ENCODE measurements at regions of chr10 and their contacts with region 1.

Region 1: GRCh38 chr10:62268399-62269114 is at the start of gene RTKN2:
- DNase-seq: peak; percentile 71
- H3K4me3 Mint-ChIP-seq: peak within 1 kb of the TSS; percentile 86
- H3K27ac Mint-ChIP-seq: peak within 1 kb of the TSS; percentile 39
- H3K4me1 Mint-ChIP-seq: peaks cover 21% of the 10 kb centered on the region
- H3K27me3 Mint-ChIP-seq: no peaks in the 10 kb centered on the region
- CTCF ChIP-seq: no peak
- total RNA-seq, gene RTKN2: 1.6 and 2.6 TPM in 2 replicates

Region 2: GRCh38 chr10:62253704-62254103 is 14.9 kb before region 1 on chr10:
- CTCF ChIA-PET with region 1: interaction called, 25 read pairs
- POLR2A ChIA-PET with region 1: interaction called, 6 read pairs
- intact Hi-C with region 1: no loop called
- DNase-seq: no peak
- H3K4me3 Mint-ChIP-seq: no peak overlapping the region
- H3K27ac Mint-ChIP-seq: no peak overlapping the region
- H3K4me1 Mint-ChIP-seq: peaks cover 10% of the 10 kb centered on the region
- H3K27me3 Mint-ChIP-seq: no peaks in the 10 kb centered on the region
- CTCF ChIP-seq: no peak

Region 3: DNA sequence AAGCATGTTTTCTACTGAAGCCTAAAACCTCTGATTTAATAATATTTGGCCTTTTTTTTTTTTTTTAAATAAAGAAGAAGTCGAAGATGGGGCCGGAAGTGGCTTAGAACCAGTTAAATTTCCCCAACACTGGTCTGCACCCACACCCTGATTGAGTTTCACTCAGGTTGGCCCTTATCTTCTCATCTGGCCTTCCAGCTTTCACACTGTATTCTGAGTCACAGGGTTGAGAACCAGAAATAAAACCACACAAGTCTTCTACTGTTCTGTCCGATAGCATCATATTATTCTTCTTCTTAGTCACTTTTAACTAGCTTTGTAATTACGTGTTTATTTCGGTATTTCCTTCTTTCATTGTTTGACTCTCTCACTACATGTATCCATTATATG is 115.5 kb after region 1 on chr10:
- CTCF ChIA-PET with region 1: interaction called, 5 read pairs
- POLR2A ChIA-PET with region 1: interaction called, 4 read pairs
- intact Hi-C with region 1: loop called (anchors 5 kb)
- DNase-seq: peak; percentile 76
- H3K4me3 Mint-ChIP-seq: peak overlapping the region; percentile 30
- H3K27ac Mint-ChIP-seq: peak overlapping the region; percentile 90
- H3K4me1 Mint-ChIP-seq: peaks cover 66% of the 10 kb centered on the region
- H3K27me3 Mint-ChIP-seq: no peaks in the 10 kb centered on the region
- CTCF ChIP-seq: no peak

Region 4: GRCh38 chr10:62414359-62414758 is 145.8 kb after region 1 on chr10:
- CTCF ChIA-PET with region 1: interaction called, 10 read pairs
- POLR2A ChIA-PET with region 1: interaction called, 4 read pairs
- intact Hi-C with region 1: loop called (anchors 1 kb)
- DNase-seq: peak; percentile 25
- H3K4me3 Mint-ChIP-seq: no peak overlapping the region
- H3K27ac Mint-ChIP-seq: no peak overlapping the region
- H3K4me1 Mint-ChIP-seq: no peaks in the 10 kb centered on the region
- H3K27me3 Mint-ChIP-seq: no peaks in the 10 kb centered on the region
- CTCF ChIP-seq: peak; percentile 10

Measured in MCF 10A (cell line).